ENCODE measurements at regions of chr14 and their contacts with region 1.

Region 1: DNA sequence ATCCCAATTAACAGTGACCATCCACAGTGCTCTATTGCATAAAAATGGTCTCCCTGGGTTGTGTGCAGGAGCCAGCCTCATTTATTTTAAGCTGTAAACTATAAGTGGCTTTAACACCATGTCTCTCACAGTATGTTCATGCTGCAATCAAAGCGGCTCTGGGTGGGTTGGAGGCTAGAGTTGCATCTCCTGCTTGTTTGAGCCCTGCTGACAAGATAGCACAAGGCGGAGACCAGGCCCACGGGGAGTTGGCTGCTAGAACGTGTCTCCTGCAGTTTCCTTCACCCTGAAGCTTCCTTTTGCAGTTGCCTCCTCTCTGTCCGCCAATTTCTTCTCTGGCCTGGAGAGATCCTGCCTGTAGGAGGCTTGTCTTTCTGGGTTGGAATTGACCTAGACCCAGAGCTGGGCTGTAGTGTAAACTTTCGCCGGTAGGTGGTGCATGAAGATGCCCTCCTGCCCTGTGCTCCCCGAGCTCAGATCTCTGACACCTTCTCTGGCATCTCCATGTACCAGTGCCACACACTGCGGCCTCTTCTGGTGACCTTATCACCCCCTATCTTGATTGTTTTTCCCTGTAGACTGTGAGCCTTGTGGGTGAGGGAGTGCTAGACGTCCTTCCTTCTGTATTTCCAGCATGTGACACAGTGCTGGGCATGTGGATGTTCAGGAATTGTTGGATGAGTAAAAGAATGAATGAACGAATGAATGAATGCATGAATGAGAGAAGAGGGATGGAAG is 10.3 kb downstream of the OTUB2 start:
- DNase-seq: peak; percentile 60 to 80 (median 63)
- H3K4me3 ChIP-seq: no peak overlapping the region
- H3K4me3 Mint-ChIP-seq: no peak overlapping the region
- H3K27ac ChIP-seq: no peak overlapping the region
- H3K27ac Mint-ChIP-seq: peak overlapping the region in 2 of 8 donors; percentile 47 to 85
- H3K4me1 ChIP-seq: no peaks in the 10 kb centered on the region
- H3K4me1 Mint-ChIP-seq: peaks cover 3 to 7% (median 5%) of the 10 kb centered on the region in 3 donors
- H3K27me3 ChIP-seq: no peaks in the 10 kb centered on the region
- H3K27me3 Mint-ChIP-seq: no peaks in the 10 kb centered on the region

Region 2: DNA sequence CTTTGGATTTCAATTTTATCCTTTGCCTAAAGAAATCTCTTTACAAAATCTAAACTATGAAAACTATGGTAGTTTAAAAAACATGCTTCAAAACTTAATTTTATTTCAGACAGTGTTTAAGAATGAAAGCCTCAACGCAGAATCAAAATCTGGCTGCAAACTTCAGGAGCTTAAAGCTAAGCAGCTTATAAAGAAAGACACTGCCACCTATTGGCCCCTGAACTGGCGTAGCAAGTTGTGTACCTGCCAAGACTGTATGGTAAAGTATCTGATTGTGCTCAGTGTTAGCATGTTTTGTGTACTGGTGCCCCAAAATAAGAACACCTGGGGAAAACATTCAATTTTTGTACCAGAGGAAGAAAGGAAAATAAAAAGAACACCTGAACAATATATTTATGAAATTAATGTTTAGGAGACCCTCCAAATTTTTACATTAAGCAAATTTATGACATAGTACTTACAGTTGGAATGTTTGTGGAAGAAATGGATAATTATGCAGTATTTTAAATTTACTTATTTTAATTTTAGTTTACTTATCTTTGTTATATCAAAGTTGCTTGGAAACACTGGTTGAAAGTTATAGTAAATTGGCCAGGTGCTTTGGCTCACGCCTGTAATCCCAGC is 817.3 kb before region 1 on chr14:
- CTCF ChIA-PET with region 1: no interaction called
- POLR2A ChIA-PET with region 1: interaction called, 11 read pairs
- DNase-seq: peak; percentile 12 to 68 (median 23)
- H3K4me3 ChIP-seq: no peak overlapping the region
- H3K4me3 Mint-ChIP-seq: no peak overlapping the region
- H3K27ac ChIP-seq: no peak overlapping the region
- H3K27ac Mint-ChIP-seq: no peak overlapping the region
- H3K4me1 ChIP-seq: no peaks in the 10 kb centered on the region
- H3K4me1 Mint-ChIP-seq: no peaks in the 10 kb centered on the region
- H3K27me3 ChIP-seq: no peaks in the 10 kb centered on the region
- H3K27me3 Mint-ChIP-seq: no peaks in the 10 kb centered on the region

Region 3: DNA sequence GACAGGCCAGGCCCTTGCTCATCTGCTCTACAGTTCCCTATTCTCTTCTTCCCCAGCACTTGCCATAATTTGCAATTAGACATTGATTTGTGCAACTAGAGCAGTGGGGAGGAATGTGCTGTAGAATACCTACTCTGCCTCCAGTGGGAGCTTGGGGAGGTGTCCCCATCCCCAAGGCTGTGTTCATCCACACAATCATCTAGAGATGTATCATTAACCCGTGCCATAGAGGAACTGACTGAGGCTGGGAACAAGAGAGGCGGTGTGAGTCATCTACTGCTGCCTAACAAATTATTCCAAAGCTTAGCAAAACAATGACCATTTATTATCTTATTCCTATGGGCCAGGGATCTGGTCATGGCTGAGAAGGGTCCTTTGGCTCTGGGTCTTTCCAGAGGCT is 15.5 kb before region 1 on chr14:
- CTCF ChIA-PET with region 1: interaction called, 16 read pairs
- POLR2A ChIA-PET with region 1: interaction called, 5 read pairs
- DNase-seq: no peak
- H3K4me3 ChIP-seq: no peak overlapping the region
- H3K4me3 Mint-ChIP-seq: no peak overlapping the region
- H3K27ac ChIP-seq: no peak overlapping the region
- H3K27ac Mint-ChIP-seq: no peak overlapping the region
- H3K4me1 ChIP-seq: peaks cover 5% of the 10 kb centered on the region
- H3K4me1 Mint-ChIP-seq: peaks cover 7 to 22% (median 19%) of the 10 kb centered on the region in 3 donors
- H3K27me3 ChIP-seq: no peaks in the 10 kb centered on the region
- H3K27me3 Mint-ChIP-seq: peaks cover 3% of the 10 kb centered on the region in 2 donors

Region 4: GRCh38 chr14:94056579-94057308 is 20.3 kb after region 1 on chr14:
- CTCF ChIA-PET with region 1: interaction called, 14 read pairs
- POLR2A ChIA-PET with region 1: no interaction called
- DNase-seq: peak in 2 of 5 donors; percentile 34 to 35
- H3K4me3 ChIP-seq: no peak overlapping the region
- H3K4me3 Mint-ChIP-seq: peak overlapping the region in 6 of 7 donors; percentile 12 to 55 (median 35)
- H3K27ac ChIP-seq: no peak overlapping the region
- H3K27ac Mint-ChIP-seq: peak overlapping the region; percentile 37 to 92 (median 72)
- H3K4me1 ChIP-seq: peaks cover 33% of the 10 kb centered on the region
- H3K4me1 Mint-ChIP-seq: peaks cover 56 to 78% (median 67%) of the 10 kb centered on the region in 3 donors
- H3K27me3 ChIP-seq: no peaks in the 10 kb centered on the region
- H3K27me3 Mint-ChIP-seq: peaks cover 0 to 2% of the 10 kb centered on the region in 2 donors

Region 5: DNA sequence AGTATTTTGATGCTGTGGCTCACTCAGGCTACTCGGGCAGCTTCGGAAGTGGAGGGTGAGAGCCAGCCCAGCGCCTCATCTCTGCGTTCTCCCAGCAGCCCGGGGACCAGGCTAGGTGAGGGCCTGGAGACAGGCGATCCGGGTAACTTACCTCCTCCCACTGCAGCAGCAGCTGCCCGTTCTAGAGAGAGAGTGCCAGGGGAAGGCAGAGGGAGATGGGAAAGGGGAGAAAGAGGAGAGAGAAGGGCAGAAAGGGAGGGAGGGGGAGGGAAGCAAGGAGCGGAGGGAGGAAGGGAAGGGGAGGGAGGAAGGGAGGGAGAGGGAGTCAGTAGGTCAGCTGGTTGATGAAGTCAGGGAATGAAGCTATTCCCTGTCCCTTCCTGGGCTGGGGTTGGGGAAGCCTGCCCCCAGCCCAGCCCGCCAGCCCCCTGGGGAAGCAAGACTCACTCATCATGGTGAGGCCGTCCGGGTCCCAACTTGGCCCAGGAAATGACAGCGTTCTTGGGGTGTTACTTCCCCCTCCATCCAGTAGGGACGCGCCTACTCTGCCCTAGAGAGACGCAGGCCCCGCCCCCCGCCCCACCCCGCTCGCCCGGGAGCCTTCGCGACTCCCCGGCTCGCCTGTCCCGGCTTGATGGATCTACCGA is 92.8 kb after region 1 on chr14 and contains the start of gene IFI27L2:
- CTCF ChIA-PET with region 1: interaction called, 18 read pairs
- POLR2A ChIA-PET with region 1: no interaction called
- DNase-seq: peak; percentile 45 to 80 (median 66)
- H3K4me3 ChIP-seq: peak within 1 kb of the TSS; percentile 85
- H3K4me3 Mint-ChIP-seq: peak within 1 kb of the TSS; percentile 83 to 98 (median 87)
- H3K27ac ChIP-seq: peak within 1 kb of the TSS; percentile 63
- H3K27ac Mint-ChIP-seq: peak within 1 kb of the TSS; percentile 55 to 93 (median 74)
- H3K4me1 ChIP-seq: peaks cover 16% of the 10 kb centered on the region
- H3K4me1 Mint-ChIP-seq: peaks cover 14 to 25% (median 19%) of the 10 kb centered on the region in 3 donors
- H3K27me3 ChIP-seq: no peaks in the 10 kb centered on the region
- H3K27me3 Mint-ChIP-seq: peaks cover 5 to 6% of the 10 kb centered on the region in 2 donors
- total RNA-seq, gene IFI27L2: 55.9 to 58.5 TPM

Region 6: DNA sequence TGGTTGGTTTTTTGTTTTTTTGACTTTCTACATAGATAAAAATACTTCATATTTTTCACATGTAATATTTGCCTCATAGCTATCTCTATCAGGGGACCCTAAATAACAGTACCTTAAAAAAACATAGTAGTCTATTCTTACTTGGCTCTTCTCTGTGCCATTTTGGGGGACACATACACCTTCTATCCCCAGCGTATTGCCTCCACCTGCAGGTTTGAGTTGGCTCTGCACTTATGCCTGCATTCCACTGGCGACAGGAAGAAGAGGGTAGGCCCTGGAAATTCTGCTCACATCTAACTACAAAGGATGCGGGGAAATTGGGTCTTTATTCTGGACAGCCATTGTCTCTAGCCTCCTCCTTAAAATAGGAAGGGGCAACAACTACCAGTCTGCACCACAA is 106.8 kb after region 1 on chr14:
- CTCF ChIA-PET with region 1: interaction called, 13 read pairs
- POLR2A ChIA-PET with region 1: no interaction called
- DNase-seq: no peak
- H3K4me3 ChIP-seq: no peak overlapping the region
- H3K4me3 Mint-ChIP-seq: no peak overlapping the region
- H3K27ac ChIP-seq: no peak overlapping the region
- H3K27ac Mint-ChIP-seq: peak overlapping the region in 1 of 8 donors; percentile 14
- H3K4me1 ChIP-seq: no peaks in the 10 kb centered on the region
- H3K4me1 Mint-ChIP-seq: peaks cover 17 to 27% (median 18%) of the 10 kb centered on the region in 3 donors
- H3K27me3 ChIP-seq: no peaks in the 10 kb centered on the region
- H3K27me3 Mint-ChIP-seq: peaks cover 0 to 4% of the 10 kb centered on the region in 2 donors

Region 7: GRCh38 chr14:94180655-94181271 is 144.3 kb after region 1 on chr14:
- CTCF ChIA-PET with region 1: interaction called, 40 read pairs
- POLR2A ChIA-PET with region 1: interaction called, 7 read pairs
- DNase-seq: peak in 2 of 5 donors; percentile 62 to 63
- H3K4me3 ChIP-seq: no peak overlapping the region
- H3K4me3 Mint-ChIP-seq: peak overlapping the region; percentile 30 to 68 (median 40)
- H3K27ac ChIP-seq: peak overlapping the region; percentile 40
- H3K27ac Mint-ChIP-seq: peak overlapping the region; percentile 15 to 87 (median 45)
- H3K4me1 ChIP-seq: no peaks in the 10 kb centered on the region
- H3K4me1 Mint-ChIP-seq: peaks cover 9 to 22% (median 18%) of the 10 kb centered on the region in 3 donors
- H3K27me3 ChIP-seq: no peaks in the 10 kb centered on the region
- H3K27me3 Mint-ChIP-seq: peaks cover 13 to 37% of the 10 kb centered on the region in 2 donors

Measured in CD8-positive, alpha-beta memory T cell (primary cell).